ENCODE measurements at regions of chr3 and their contacts with region 1.

Region 1: DNA sequence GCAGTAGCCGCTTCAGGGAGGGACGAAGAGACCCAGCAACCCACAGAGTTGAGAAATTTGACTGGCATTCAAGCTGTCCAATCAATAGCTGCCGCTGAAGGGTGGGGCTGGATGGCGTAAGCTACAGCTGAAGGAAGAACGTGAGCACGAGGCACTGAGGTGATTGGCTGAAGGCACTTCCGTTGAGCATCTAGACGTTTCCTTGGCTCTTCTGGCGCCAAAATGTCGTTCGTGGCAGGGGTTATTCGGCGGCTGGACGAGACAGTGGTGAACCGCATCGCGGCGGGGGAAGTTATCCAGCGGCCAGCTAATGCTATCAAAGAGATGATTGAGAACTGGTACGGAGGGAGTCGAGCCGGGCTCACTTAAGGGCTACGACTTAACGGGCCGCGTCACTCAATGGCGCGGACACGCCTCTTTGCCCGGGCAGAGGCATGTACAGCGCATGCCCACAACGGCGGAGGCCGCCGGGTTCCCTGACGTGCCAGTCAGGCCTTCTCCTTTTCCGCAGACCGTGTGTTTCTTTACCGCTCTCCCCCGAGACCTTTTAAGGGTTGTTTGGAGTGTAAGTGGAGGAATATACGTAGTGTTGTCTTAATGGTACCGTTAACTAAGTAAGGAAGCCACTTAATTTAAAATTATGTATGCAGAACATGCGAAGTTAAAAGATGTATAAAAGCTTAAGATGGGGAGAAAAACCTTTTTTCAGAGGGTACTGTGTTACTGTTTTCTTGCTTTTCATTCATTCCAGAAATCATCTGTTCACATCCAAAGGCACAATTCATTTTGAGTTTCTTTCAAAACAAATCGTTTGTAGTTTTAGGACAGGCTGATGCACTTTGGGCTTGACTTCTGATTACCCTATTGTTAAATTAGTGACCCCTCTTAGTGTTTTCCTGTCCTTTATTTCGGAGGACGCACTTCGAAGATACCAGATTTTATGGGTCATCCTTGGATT is at the start of gene MLH1:
- DNase-seq: peak; percentile 91 to 100
- ATAC-seq: peak; percentile 90 to 92
- H3K4me3 ChIP-seq: peak within 1 kb of the TSS; percentile 61
- H3K27ac ChIP-seq: peak within 1 kb of the TSS; percentile 90 to 92
- H3K4me1 ChIP-seq: peaks cover 33% of the 10 kb centered on the region
- CTCF ChIP-seq: no peak
- EP300 ChIP-seq: no peak
- POLR2A ChIP-seq: peak; percentile 85
- RAD21 ChIP-seq: no peak
- polyA plus RNA-seq, gene MLH1: 70.2 and 73.1 TPM in 2 replicates

Region 2: DNA sequence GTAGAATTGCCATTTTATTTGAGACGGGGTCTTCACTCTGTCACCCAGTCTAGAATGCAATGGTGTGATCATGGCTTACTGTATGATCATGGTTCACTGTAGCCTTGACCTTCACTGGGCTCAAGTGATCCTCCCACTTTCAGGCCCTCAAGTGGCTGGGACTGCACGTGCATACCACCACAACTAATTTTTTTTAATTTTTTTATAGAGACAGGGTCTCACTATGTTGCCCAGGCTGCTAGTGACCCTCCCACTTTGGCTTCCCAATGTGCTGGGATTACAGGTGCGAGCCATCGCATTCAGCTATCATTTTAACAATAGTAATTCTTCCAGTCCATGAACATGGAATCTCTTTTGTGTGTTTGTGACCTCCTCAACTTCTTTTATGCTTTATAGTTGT is 12.6 kb before region 1 on chr3:
- CTCF ChIA-PET with region 1: interaction called, 4 read pairs
- POLR2A ChIA-PET with region 1: interaction called, 10 read pairs
- DNase-seq: no peak
- ATAC-seq: peak in 1 of 2 experiments; percentile 25; a peak in 1 of 6 replicates
- H3K4me3 ChIP-seq: no peak overlapping the region
- H3K27ac ChIP-seq: no peak overlapping the region
- H3K4me1 ChIP-seq: no peaks in the 10 kb centered on the region
- CTCF ChIP-seq: no peak
- EP300 ChIP-seq: no peak
- POLR2A ChIP-seq: no peak
- RAD21 ChIP-seq: no peak

Region 3: DNA sequence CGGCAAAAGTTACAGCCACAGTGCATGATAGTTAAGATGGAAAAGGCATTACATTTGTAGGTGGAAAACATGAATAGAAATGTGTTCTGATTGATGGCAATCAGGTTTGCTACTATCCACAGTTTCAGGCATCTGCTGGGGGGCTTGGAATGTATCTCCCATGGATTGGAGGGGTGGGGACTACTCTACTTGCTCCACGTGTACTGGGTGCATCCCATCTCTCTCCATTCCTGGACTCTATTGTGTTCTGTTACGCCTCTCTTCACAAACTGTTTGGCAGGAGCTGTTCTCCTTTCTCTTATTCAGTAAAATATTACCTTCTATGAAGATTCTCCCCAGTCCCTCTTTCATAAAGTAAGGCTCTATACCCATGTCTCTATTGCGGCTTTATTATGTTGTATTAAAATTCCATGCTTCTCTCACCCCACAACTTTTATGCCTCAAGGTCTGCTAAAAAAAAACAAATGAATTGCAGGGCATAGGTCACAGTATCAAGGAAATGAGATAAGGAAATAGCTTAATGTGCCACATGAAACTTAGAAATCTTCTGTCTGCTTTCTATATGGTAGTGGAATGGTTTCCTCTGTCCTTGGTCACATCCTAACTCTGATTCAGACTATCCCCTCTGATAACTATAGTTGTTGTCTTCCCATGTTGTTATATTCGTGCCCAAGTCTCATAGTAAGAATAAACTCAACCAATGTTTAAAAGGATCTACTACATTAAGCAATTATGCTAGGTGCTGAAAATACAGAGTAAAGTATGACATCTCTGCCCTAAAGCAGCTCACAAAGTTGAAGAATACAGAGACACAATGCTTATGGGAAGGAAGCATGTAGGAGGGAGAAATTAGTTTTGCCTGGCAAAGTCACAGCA is 137.6 kb after region 1 on chr3:
- CTCF ChIA-PET with region 1: no interaction called
- POLR2A ChIA-PET with region 1: interaction called, 11 read pairs
- DNase-seq: no peak
- ATAC-seq: no peak; a peak in 2 of 6 replicates
- H3K4me3 ChIP-seq: no peak overlapping the region
- H3K27ac ChIP-seq: peak overlapping the region in 1 of 2 experiments; percentile 5; a peak in 1 of 6 replicates
- H3K4me1 ChIP-seq: peaks cover 45% of the 10 kb centered on the region
- CTCF ChIP-seq: no peak
- EP300 ChIP-seq: no peak
- POLR2A ChIP-seq: no peak
- RAD21 ChIP-seq: no peak

Region 4: GRCh38 chr3:37183375-37183841 is 189.8 kb after region 1 on chr3:
- CTCF ChIA-PET with region 1: no interaction called
- POLR2A ChIA-PET with region 1: interaction called, 11 read pairs
- DNase-seq: peak in 1 of 2 experiments; percentile 57
- ATAC-seq: peak; percentile 82 to 88
- H3K4me3 ChIP-seq: no peak overlapping the region
- H3K27ac ChIP-seq: peak overlapping the region; percentile 48 to 52
- H3K4me1 ChIP-seq: peaks cover 36% of the 10 kb centered on the region
- CTCF ChIP-seq: no peak
- EP300 ChIP-seq: no peak
- POLR2A ChIP-seq: no peak
- RAD21 ChIP-seq: 0 out of 5 replicates have a peak, but pooled peaks of 1 of the 2 experiments have one; percentile 10

Region 5: DNA sequence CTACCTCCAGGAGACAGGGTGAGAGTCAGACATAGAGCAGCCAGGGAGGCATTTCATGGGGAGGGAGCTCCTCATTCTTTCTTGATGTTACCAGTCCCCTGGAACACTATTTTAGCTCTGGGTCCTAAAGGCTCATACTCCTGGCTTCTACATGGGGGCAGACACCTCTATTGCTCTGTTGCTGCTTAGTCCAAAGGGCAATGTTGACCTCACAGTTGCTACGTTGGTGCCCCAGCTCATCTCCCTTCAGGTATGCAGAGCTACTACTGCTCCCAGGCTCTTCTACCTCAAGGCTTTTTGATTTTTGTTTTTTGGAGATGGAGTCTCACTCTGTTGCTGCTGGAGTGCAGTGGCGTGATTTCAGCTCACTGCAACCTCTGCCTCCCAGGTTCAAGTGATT is 426.4 kb after region 1 on chr3:
- CTCF ChIA-PET with region 1: no interaction called
- POLR2A ChIA-PET with region 1: no interaction called
- DNase-seq: no peak
- ATAC-seq: no peak
- H3K4me3 ChIP-seq: no peak overlapping the region
- H3K27ac ChIP-seq: no peak overlapping the region
- H3K4me1 ChIP-seq: no peaks in the 10 kb centered on the region
- CTCF ChIP-seq: no peak
- EP300 ChIP-seq: no peak
- POLR2A ChIP-seq: no peak
- RAD21 ChIP-seq: no peak